ENCODE measurements at regions of chr6 and their contacts with region 1.

Region 1: GRCh38 chr6:25138237-25139125 is 140.7 kb upstream of the CARMIL1 start:
- DNase-seq: peak; percentile 82
- ATAC-seq: peak; percentile 91
- H3K4me3 Mint-ChIP-seq: peak overlapping the region; percentile 88
- H3K27ac Mint-ChIP-seq: peak overlapping the region; percentile 98
- H3K4me1 Mint-ChIP-seq: peaks cover 40% of the 10 kb centered on the region
- H3K27me3 Mint-ChIP-seq: no peaks in the 10 kb centered on the region
- CTCF ChIP-seq: peak; percentile 21

Region 2: DNA sequence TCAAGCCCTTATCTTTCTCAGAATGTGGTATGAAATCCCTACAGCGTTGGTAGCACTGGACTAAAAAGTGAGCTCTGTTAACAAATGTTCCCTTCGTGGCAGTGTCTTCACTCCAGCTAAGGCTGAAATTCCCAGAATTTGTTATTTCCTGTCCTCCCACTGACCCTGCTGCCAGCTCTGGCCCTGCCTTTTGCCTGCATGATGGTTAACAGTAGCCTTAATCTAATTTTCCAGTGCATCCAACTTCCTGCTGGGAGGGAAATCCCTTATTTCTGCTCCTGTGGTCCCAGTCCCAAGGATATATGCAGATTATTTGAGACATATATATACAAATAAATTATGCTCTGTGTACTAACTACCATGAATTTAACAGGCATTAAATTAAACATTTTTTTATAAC is 16.5 kb before region 1 on chr6:
- CTCF ChIA-PET with region 1: no interaction called
- POLR2A ChIA-PET with region 1: interaction called, 15 read pairs
- intact Hi-C with region 1: no loop called
- DNase-seq: no peak
- ATAC-seq: no peak
- H3K4me3 Mint-ChIP-seq: no peak overlapping the region
- H3K27ac Mint-ChIP-seq: no peak overlapping the region
- H3K4me1 Mint-ChIP-seq: peaks cover 47% of the 10 kb centered on the region
- H3K27me3 Mint-ChIP-seq: no peaks in the 10 kb centered on the region
- CTCF ChIP-seq: no peak

Region 3: DNA sequence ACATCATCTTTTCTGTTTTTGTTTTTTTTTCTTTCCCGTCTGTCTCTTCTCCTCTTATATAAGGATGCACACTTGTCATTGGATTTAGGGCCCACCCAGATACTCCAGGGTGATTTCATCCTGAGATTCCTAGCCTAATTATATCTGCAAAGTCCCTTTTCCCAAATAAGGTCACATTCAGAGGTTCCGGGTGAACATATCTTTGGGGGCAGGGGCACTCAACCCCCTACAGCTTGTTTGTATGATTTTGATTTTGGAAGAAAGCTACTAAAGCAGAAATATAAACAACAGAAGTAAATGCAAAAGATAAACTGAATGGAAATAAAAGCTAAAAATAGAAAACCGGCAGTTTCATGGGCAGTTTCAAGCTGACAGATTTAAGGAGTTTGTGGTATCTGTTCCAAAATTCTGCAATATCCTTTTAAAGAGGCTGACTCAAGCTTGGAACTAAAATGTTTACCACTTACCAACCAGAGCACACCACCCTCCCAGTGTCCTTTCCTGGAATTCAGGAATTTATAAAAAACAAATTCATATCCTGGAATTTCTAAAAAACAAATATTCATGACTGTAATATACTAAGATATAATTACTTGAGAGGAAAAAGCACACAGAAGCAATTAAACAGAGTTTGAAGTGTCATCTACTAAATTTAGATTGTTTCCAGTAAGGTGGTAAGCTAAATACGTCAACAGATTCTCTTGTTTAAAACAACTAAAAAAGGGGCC is 40.7 kb after region 1 on chr6:
- CTCF ChIA-PET with region 1: interaction called, 3 read pairs
- POLR2A ChIA-PET with region 1: interaction called, 11 read pairs
- intact Hi-C with region 1: no loop called
- DNase-seq: no peak
- ATAC-seq: no peak
- H3K4me3 Mint-ChIP-seq: no peak overlapping the region
- H3K27ac Mint-ChIP-seq: peak overlapping the region; percentile 36
- H3K4me1 Mint-ChIP-seq: peaks cover 27% of the 10 kb centered on the region
- H3K27me3 Mint-ChIP-seq: peaks cover 4% of the 10 kb centered on the region
- CTCF ChIP-seq: no peak

Measured in activated CD8-positive, alpha-beta T cell treated with anti-CD3 and anti-CD28 coated beads for 36 hours (primary cell).